Heart left ventricle (tissue), 16 donors: ENCODE measurements at regions of chr19 and their contacts with region 1.

Region 1: DNA sequence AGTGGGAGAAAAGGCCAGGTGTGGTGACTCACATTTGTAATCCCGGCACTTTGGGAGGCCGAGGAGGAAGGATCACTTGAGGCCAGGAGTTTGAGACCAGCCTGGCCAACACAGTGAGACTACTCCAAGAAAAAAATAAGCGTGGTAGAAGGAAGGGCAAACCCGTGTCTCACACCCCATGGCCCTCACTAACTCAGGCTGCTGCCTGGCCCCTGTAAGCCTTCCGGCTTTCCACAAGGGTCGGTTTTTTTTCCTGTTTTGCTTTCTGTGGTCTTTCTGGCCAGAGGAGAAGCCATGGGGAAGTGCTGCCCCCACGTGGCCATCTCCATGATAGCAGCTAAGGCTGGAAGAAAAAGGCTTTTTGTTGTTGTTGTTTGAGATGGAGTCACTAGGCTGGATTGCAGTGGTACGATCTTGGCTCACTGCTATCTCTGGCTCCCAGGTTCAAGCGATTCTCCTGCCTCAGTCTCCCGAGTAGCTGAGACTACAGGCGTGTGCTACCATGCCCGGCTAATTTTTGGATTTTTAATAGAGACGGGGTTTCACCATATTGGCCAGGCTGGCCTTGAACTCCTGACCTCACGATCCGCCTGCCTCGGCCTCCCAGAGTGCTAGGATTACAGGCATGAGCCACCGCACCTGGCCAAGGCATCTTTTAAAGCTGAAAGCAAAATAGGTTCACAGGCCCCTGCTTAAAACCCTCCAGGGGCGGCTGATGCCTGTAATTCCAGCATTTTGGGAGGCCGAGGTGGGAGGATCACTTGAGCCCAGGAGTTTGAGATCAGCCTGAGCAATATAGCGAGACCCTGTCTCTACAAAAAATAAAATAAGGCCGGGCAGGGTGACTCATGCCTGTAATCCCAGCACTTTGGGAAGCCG is 7.5 kb upstream of the ARHGEF18 start:
- DNase-seq: peak; percentile 63 to 88 (median 75)
- ATAC-seq: peak in 3 of 4 donors; percentile 44 to 57 (median 48)
- H3K4me3 ChIP-seq: no peak overlapping the region
- H3K27ac ChIP-seq: no peak overlapping the region
- H3K4me1 ChIP-seq: peaks cover 0 to 46% (median 2%) of the 10 kb centered on the region in 12 donors
- H3K27me3 ChIP-seq: no peaks in the 10 kb centered on the region
- CTCF ChIP-seq: peak; percentile 90 to 98 (median 95)
- POLR2A ChIP-seq: no peak

Region 2: GRCh38 chr19:7098701-7099596 is 242.2 kb before region 1 on chr19:
- intact Hi-C with region 1: loop called (anchors 1 to 2 kb)
- DNase-seq: peak; percentile 92 to 96 (median 94)
- ATAC-seq: peak; percentile 94 to 97 (median 96)
- H3K4me3 ChIP-seq: peak overlapping the region; percentile 30 to 91 (median 63)
- H3K27ac ChIP-seq: peak overlapping the region; percentile 91 to 98 (median 92)
- H3K4me1 ChIP-seq: peaks cover 0 to 12% (median 4%) of the 10 kb centered on the region in 12 donors
- H3K27me3 ChIP-seq: no peaks in the 10 kb centered on the region
- CTCF ChIP-seq: no peak
- POLR2A ChIP-seq: peak in 1 of 2 donors; percentile 57

Region 3: DNA sequence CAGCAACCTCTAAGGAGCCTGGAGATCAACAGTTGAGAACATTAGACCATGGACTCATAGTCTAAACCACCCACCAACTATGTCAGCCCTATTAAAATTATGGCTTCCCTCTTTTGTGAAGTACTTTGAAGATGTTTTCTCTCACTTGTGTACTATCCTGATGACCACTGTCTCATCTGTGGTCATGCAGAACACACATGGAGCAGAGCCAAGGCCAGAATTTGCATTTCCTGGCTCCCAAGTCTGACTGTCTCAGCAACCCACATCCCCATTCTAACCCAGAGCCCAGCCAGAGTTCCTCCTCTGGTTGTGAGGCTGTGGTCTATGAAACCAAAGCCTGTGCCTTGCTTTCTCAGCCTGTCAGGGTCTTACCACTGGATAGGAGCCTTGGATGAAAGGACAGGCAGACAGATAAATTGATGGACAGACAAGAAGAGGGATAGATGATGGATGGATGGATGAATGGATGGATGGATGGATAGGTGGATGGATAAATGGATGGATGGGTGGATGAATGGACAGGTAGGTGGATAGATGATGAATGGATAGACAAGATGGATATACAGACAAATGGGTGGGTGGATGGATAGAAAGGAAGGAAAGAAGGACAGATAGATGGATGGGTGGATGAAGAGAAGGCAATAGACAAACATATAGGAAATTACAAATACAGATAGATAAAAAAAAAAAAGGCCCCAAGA is 236.3 kb before region 1 on chr19:
- intact Hi-C with region 1: loop called (anchors 1 to 2 kb)
- DNase-seq: no peak
- ATAC-seq: peak in 2 of 4 donors; percentile 16 to 24
- H3K4me3 ChIP-seq: no peak overlapping the region
- H3K27ac ChIP-seq: no peak overlapping the region
- H3K4me1 ChIP-seq: peaks cover 0 to 5% (median 0%) of the 10 kb centered on the region in 12 donors
- H3K27me3 ChIP-seq: peaks cover 0 to 4% (median 0%) of the 10 kb centered on the region in 9 donors
- CTCF ChIP-seq: no peak
- POLR2A ChIP-seq: no peak

Region 4: GRCh38 chr19:7145494-7146485 is 195.4 kb before region 1 on chr19:
- intact Hi-C with region 1: loop called (anchors 1 to 5 kb)
- DNase-seq: no peak
- ATAC-seq: peak in 1 of 4 donors; percentile 23
- H3K4me3 ChIP-seq: no peak overlapping the region
- H3K27ac ChIP-seq: peak overlapping the region in 2 of 12 donors; percentile 2 to 30
- H3K4me1 ChIP-seq: peaks cover 0 to 4% (median 0%) of the 10 kb centered on the region in 12 donors
- H3K27me3 ChIP-seq: no peaks in the 10 kb centered on the region
- CTCF ChIP-seq: no peak
- POLR2A ChIP-seq: no peak

Region 5: DNA sequence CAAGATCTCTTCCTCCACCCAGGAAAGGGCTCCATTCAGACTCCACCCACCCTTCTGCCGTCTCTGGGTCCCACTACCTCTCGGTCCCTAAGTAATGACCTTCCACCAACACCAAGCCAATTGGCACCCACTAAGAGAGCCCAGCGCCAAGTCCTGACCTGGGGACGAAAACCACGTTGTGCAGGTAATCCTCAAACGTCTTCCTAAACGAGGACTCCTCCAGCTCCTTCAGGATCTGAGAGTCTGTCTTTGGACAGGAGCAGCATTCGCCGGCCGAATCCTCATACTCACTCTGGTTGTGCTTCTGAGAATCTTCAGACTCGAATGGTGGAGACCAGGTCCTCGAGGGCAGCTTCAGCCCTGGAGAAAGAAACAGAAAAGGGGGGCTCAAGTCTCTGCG is 188.6 kb before region 1 on chr19:
- intact Hi-C with region 1: loop called (anchors 1 to 5 kb)
- DNase-seq: no peak
- ATAC-seq: peak in 1 of 4 donors; percentile 15
- H3K4me3 ChIP-seq: no peak overlapping the region
- H3K27ac ChIP-seq: no peak overlapping the region
- H3K4me1 ChIP-seq: peaks cover 0 to 8% (median 0%) of the 10 kb centered on the region in 12 donors
- H3K27me3 ChIP-seq: no peaks in the 10 kb centered on the region
- CTCF ChIP-seq: no peak
- POLR2A ChIP-seq: no peak

Region 6: GRCh38 chr19:7506385-7507328 is 165.5 kb after region 1 on chr19:
- intact Hi-C with region 1: no loop called
- DNase-seq: peak; percentile 52 to 90 (median 74)
- ATAC-seq: peak; percentile 24 to 93 (median 90)
- H3K4me3 ChIP-seq: no peak overlapping the region
- H3K27ac ChIP-seq: no peak overlapping the region
- H3K4me1 ChIP-seq: peaks cover 0 to 14% (median 5%) of the 10 kb centered on the region in 12 donors
- H3K27me3 ChIP-seq: peaks cover 0 to 40% (median 17%) of the 10 kb centered on the region in 9 donors
- CTCF ChIP-seq: no peak
- POLR2A ChIP-seq: no peak